GM10248 (cell line): ENCODE measurements at regions of chr6 and their contacts with region 1.

Region 1: DNA sequence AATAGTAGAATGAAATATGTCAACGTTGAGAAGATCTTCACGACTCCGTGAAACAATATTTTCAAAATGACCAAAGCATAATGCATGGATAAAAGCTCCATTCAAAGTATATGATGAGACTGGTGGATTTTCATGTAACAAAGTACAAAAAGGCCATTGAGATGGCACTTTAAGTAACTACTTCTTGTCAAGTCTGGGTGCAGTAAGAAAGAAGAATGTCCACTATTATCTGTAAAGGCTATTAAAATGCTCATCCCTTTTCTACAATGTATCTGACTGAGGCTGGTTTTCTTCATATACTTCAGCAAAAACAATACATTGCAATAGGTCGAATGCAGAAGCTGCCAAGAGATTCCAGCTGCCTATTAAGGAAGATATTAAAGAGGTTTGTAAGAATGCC is 457.4 kb downstream of the PKHD1 start:
- DNase-seq: no peak
- CTCF ChIP-seq: no peak

Region 2: DNA sequence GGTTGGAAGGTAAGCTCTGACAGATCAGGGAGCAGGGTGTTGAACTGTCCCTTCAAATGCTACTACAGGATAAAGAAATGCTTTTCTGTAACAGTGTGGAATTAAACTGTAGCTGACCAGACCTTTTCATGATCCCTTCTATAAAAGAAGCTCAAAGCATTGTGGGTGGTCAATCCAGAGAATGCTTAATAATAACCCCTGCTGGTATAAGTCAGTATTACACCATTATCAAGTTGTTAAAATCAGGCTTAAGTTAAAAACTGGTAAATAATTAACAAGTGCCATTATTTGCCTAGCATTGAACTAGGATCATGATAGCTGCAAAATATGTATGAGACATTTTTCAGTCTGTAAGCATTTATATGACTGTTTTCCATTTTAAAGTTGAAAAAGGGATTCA is 11.4 kb before region 1 on chr6:
- CTCF ChIA-PET with region 1: interaction called, 29 read pairs
- POLR2A ChIA-PET with region 1: no interaction called
- DNase-seq: no peak
- CTCF ChIP-seq: peak; percentile 1

Region 3: GRCh38 chr6:51711876-51712275 is 81.9 kb after region 1 on chr6:
- CTCF ChIA-PET with region 1: no interaction called
- POLR2A ChIA-PET with region 1: no interaction called
- DNase-seq: no peak
- CTCF ChIP-seq: no peak